ENCODE measurements at regions of chr20 and their contacts with region 1.

Region 1: DNA sequence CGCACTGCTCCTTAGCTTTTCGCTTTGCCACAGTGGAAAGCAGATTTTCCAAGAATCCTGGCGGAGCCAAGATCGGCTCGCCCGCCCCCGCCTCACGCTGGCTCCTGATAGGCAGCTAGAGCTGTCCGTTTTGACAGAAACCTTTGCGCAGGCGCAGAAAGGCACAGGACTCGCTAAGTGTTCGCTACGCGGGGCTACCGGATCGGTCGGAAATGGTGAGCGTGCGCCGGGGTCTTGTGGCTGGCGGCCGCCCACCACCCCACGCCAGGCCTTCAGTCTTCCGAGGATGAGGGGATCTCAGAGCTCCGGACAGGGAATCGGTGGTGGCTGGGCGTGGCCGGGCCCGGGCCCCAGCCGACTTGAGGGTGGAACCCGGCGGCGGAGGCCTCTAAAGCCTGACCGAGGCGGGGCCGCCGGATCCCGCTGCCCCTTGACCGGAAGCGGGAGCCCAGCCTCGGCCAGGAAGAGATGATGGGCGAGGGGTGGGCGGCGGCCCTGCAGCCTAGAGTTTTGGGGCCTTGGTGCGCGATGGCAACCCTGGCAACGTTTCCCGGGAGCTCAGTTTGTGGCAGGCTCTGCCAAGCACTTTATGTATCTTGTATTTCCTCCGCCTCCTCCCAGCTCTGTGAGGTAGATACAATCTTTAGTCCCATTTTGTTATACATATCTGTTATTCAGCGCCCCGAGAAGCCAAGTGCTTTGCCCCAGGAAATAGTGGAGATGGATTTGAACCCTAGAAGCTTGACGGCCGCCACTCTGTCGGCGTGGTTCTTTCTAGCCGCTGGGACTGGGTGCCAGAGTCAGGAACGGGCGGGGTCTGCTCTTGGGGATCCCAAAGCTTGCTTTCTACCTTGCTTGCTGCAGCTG is at the start of gene DYNLRB1:
- DNase-seq: peak; percentile 98
- ATAC-seq: peak; percentile 81
- H3K4me3 Mint-ChIP-seq: peak within 1 kb of the TSS; percentile 97
- H3K27ac Mint-ChIP-seq: peak within 1 kb of the TSS; percentile 98
- H3K4me1 Mint-ChIP-seq: peaks cover 35% of the 10 kb centered on the region
- H3K27me3 Mint-ChIP-seq: no peaks in the 10 kb centered on the region
- total RNA-seq, gene DYNLRB1: 83.5 to 122 TPM

Region 2: GRCh38 chr20:34302723-34303528 is 213.6 kb before region 1 on chr20 and contains the start of gene AHCY:
- CTCF ChIA-PET with region 1: interaction called, 7 read pairs
- POLR2A ChIA-PET with region 1: interaction called, 8 read pairs
- intact Hi-C with region 1: loop called (anchors 1 kb)
- DNase-seq: peak; percentile 97
- ATAC-seq: peak; percentile 96
- H3K4me3 Mint-ChIP-seq: peak within 1 kb of the TSS; percentile 90
- H3K27ac Mint-ChIP-seq: peak within 1 kb of the TSS; percentile 91
- H3K4me1 Mint-ChIP-seq: peaks cover 18% of the 10 kb centered on the region
- H3K27me3 Mint-ChIP-seq: no peaks in the 10 kb centered on the region
- total RNA-seq, gene AHCY: 183 to 189 TPM

Region 3: DNA sequence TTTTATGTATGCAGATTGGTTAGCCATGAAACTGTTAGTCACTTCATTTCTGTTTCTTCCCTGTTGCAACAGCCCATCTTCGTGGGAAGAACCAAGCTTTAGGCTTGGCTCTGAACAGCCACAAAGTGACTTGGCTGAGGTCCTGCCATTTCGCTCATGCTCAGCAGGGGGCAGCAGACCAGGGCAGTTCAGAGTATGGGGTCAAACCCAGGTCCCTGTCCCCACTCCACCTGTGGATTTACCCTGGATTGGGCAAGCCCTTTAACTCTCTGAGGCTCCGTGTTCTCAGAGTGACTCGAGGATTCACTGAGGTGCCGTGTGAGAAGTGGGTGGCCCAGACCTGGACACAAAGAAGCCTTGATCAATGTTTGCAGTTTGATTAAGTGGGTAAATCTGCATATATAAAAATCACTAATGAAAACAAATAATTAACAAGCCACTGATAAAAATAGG is 22.2 kb after region 1 on chr20:
- CTCF ChIA-PET with region 1: interaction called, 12 read pairs
- POLR2A ChIA-PET with region 1: interaction called, 5 read pairs
- intact Hi-C with region 1: no loop called
- DNase-seq: peak; percentile 78
- ATAC-seq: peak; percentile 61
- H3K4me3 Mint-ChIP-seq: no peak overlapping the region
- H3K27ac Mint-ChIP-seq: no peak overlapping the region
- H3K4me1 Mint-ChIP-seq: peaks cover 7% of the 10 kb centered on the region
- H3K27me3 Mint-ChIP-seq: no peaks in the 10 kb centered on the region

Region 4: GRCh38 chr20:34579979-34580940 is 63.8 kb after region 1 on chr20:
- CTCF ChIA-PET with region 1: no interaction called
- POLR2A ChIA-PET with region 1: no interaction called
- intact Hi-C with region 1: loop called in 1 of 2 experiments (anchors 2 kb)
- DNase-seq: peak; percentile 29
- ATAC-seq: peak; percentile 20
- H3K4me3 Mint-ChIP-seq: no peak overlapping the region
- H3K27ac Mint-ChIP-seq: peak overlapping the region; percentile 91
- H3K4me1 Mint-ChIP-seq: peaks cover 30% of the 10 kb centered on the region
- H3K27me3 Mint-ChIP-seq: no peaks in the 10 kb centered on the region

Region 5: DNA sequence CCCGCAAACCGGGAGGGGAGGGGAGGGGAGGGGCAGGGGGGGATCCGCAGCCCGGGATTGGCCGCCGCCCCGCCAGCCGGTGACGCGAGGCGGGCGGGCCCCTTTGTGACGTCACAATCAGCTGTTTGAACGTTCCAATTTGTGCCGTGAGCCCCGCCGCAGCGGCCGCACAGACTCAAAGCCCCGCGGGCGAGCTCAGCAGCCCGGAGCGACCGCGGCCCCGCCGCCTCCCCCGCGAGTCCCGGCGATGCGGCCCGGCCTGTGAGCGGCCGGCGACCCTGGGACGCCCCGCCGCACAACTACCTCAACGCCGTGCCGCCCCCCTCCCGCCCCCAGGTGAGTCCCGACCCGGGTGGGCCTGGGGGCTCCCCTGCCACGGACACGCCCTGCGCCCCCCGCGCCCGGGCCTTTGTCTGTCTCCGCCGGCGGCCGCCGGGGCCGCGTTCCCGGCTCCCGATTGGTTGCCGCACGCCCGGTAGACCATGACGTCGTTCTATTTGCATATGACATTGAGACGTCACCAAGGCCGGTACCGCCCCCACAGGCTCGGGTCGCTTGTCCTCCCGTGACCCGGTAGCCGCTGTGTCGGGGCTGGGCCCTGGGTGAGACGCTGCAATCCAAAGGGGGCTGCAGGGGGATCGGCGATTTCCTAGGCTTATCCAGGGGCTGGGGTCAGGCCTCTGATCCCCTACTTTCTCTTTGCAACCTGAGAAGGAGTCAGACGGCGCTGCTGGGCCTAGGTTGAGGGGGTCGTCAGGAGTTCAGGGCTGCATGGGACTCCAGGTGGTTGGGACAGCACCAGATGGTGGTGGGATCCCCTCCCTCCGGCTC is 187.9 kb after region 1 on chr20 and contains the start of gene TP53INP2:
- CTCF ChIA-PET with region 1: interaction called, 12 read pairs
- POLR2A ChIA-PET with region 1: no interaction called
- intact Hi-C with region 1: loop called (anchors 1 to 5 kb)
- DNase-seq: peak; percentile 89
- ATAC-seq: peak; percentile 33
- H3K4me3 Mint-ChIP-seq: peak within 1 kb of the TSS; percentile 82
- H3K27ac Mint-ChIP-seq: peak within 1 kb of the TSS; percentile 63
- H3K4me1 Mint-ChIP-seq: peaks cover 22% of the 10 kb centered on the region
- H3K27me3 Mint-ChIP-seq: peaks cover 10% of the 10 kb centered on the region
- total RNA-seq, gene TP53INP2: 2.2 to 2.3 TPM

Region 6: DNA sequence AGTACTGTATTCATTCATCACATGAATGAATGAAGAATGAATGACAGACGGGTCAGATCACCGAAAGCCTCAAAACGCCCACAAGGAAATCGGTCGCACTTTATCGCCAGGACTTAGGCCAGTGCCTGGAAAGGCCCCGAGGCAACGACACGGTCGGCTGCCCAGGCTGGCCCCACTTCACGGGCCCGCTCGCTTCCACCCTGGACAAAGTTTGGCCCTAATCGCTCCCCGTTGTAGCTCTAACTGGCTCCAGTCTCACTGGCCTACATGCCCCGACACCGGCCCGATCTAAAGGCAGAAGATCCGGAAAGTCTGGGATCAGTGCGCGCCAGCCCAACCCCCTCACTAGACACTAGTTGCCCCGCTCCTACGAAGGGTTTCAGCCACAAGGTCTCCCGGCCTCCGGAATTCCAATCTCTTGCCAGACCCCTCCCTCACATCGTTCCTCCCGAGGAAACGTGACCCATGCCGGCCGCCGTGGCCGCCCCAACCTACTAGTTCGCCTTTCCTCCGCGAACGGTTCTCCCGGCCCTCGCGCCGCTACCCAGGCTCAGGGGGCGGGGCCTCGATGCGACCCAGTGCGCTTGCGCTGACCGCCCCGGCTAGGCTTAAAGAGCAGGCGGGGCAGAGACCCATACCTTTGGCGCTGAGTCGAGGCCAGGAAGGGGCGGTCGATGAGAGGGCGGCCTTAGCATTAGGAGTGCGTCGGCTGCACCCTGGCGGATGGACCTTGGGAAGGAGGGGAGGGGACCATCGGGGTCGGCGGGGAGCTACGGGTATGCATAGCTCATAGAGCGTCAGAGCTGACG is 439.0 kb after region 1 on chr20 and contains the starts of genes GSS and MYH7B:
- CTCF ChIA-PET with region 1: no interaction called
- POLR2A ChIA-PET with region 1: no interaction called
- intact Hi-C with region 1: loop called in 1 of 2 experiments (anchors 1 kb)
- DNase-seq: peak; percentile 99
- ATAC-seq: peak; percentile 95
- H3K4me3 Mint-ChIP-seq: peak within 1 kb of the TSS; percentile 98
- H3K27ac Mint-ChIP-seq: peak within 1 kb of the TSS; percentile 94
- H3K4me1 Mint-ChIP-seq: peaks cover 16% of the 10 kb centered on the region
- H3K27me3 Mint-ChIP-seq: no peaks in the 10 kb centered on the region
- total RNA-seq, gene GSS: 58.7 to 59.5 TPM
- total RNA-seq, gene MYH7B: 0.23 to 0.40 TPM